ENCODE measurements at regions of chr13 and their contacts with region 1.

Region 1: GRCh38 chr13:29850224-29850898 is at the start of gene UBL3:
- DNase-seq: peak; percentile 89 to 97 (median 96)
- H3K4me3 ChIP-seq: peak within 1 kb of the TSS; percentile 74 to 91 (median 88)
- H3K4me3 Mint-ChIP-seq: peak within 1 kb of the TSS; percentile 97 to 99
- H3K27ac ChIP-seq: peak within 1 kb of the TSS; percentile 86 to 92
- H3K27ac Mint-ChIP-seq: peak within 1 kb of the TSS; percentile 97 to 100 (median 99)
- H3K4me1 ChIP-seq: peaks cover 19 to 28% of the 10 kb centered on the region in 2 donors
- H3K4me1 Mint-ChIP-seq: peaks cover 33% of the 10 kb centered on the region
- H3K27me3 ChIP-seq: no peaks in the 10 kb centered on the region
- H3K27me3 Mint-ChIP-seq: no peaks in the 10 kb centered on the region
- CTCF ChIP-seq: no peak
- polyA plus RNA-seq, gene UBL3: 13.0 to 32.3 (median 28.2) TPM

Region 2: GRCh38 chr13:29595380-29596063 is 254.8 kb before region 1 on chr13 and contains the start of gene SLC7A1:
- intact Hi-C with region 1: loop called in 1 of 2 experiments (anchors 10 kb)
- DNase-seq: peak; percentile 80 to 86 (median 82)
- H3K4me3 ChIP-seq: peak within 1 kb of the TSS; percentile 47 to 79 (median 77)
- H3K4me3 Mint-ChIP-seq: peak within 1 kb of the TSS; percentile 87 to 89
- H3K27ac ChIP-seq: peak within 1 kb of the TSS; percentile 38 to 95
- H3K27ac Mint-ChIP-seq: peak within 1 kb of the TSS; percentile 81 to 89 (median 87)
- H3K4me1 ChIP-seq: peaks cover 12 to 21% of the 10 kb centered on the region in 2 donors
- H3K4me1 Mint-ChIP-seq: peaks cover 25% of the 10 kb centered on the region
- H3K27me3 ChIP-seq: peaks cover 2 to 12% of the 10 kb centered on the region in 2 donors
- H3K27me3 Mint-ChIP-seq: peaks cover 10 to 17% (median 15%) of the 10 kb centered on the region in 3 donors
- CTCF ChIP-seq: no peak
- polyA plus RNA-seq, gene SLC7A1: 0.89 to 2.2 (median 0.92) TPM

Region 3: DNA sequence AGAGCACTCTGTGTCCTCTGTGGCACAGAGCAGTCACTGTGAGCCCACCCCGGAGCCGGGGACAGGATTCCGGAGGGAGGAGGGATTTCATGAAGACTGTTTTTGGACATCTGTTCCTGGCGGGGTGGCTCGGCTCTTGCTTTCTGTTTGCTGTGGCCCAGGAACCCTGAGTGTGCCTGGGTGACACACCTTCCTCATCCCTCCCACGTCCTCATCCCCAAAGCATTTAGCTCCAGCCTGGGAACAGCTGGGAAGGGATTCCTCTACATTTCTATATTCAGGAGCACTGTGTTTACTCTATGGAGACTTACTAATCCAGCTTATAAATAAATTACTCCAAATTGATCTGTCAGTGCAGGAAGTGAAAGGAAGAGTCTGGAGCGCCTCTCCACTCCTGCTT is 97.9 kb after region 1 on chr13:
- intact Hi-C with region 1: no loop called
- DNase-seq: no peak
- H3K4me3 ChIP-seq: no peak overlapping the region
- H3K4me3 Mint-ChIP-seq: no peak overlapping the region
- H3K27ac ChIP-seq: no peak overlapping the region
- H3K27ac Mint-ChIP-seq: no peak overlapping the region
- H3K4me1 ChIP-seq: peaks cover 0 to 6% of the 10 kb centered on the region in 2 donors
- H3K4me1 Mint-ChIP-seq: peaks cover 7% of the 10 kb centered on the region
- H3K27me3 ChIP-seq: no peaks in the 10 kb centered on the region
- H3K27me3 Mint-ChIP-seq: peaks cover 0 to 2% (median 1%) of the 10 kb centered on the region in 3 donors
- CTCF ChIP-seq: no peak

Region 4: DNA sequence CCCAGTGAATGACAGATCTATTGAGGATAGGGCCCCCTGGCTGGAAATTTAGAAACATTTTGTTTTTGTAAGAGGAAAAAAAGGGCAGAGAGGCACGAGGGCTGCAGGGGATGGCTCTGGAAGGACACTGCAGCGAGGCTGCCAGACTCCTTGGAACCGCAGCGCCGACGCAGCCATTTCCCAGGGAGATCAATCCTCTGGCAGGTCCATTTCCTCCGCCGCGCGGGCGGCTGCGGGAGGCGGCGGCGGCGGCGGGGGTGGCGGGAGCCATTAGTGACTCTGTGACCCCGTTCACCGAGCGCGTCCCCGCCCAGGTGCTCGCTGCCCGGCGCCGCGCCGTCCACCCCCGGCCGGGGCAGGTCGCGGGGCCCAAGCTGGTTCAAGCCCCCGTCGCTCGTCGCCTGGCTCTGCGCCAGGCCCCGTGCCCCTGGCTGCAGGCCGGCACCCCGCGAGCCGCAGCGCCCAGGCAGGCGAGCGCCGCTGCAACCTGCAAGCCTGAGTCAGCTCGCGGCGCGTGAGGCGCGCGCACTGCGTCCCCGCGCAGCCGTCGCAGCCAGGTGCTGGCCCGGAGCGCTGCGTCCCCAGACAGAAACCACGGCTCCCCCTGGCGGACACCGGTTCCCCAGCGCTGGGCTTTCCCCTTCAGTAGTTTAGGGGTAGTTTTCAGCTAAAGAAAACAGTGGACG is 264.4 kb after region 1 on chr13:
- intact Hi-C with region 1: loop called in 1 of 2 experiments (anchors 10 kb)
- DNase-seq: peak; percentile 75 to 86 (median 75)
- H3K4me3 ChIP-seq: peak overlapping the region in 2 of 3 experiments; percentile 14 to 74
- H3K4me3 Mint-ChIP-seq: peak overlapping the region; percentile 76 to 88
- H3K27ac ChIP-seq: no peak overlapping the region
- H3K27ac Mint-ChIP-seq: no peak overlapping the region
- H3K4me1 ChIP-seq: peaks cover 13 to 14% of the 10 kb centered on the region in 2 donors
- H3K4me1 Mint-ChIP-seq: peaks cover 27% of the 10 kb centered on the region
- H3K27me3 ChIP-seq: peaks cover 2 to 18% of the 10 kb centered on the region in 2 donors
- H3K27me3 Mint-ChIP-seq: peaks cover 13 to 22% (median 21%) of the 10 kb centered on the region in 3 donors
- CTCF ChIP-seq: peak; percentile 91

Region 5: GRCh38 chr13:30332456-30333143 is 482.2 kb after region 1 on chr13:
- intact Hi-C with region 1: no loop called
- DNase-seq: no peak
- H3K4me3 ChIP-seq: no peak overlapping the region
- H3K4me3 Mint-ChIP-seq: no peak overlapping the region
- H3K27ac ChIP-seq: no peak overlapping the region
- H3K27ac Mint-ChIP-seq: no peak overlapping the region
- H3K4me1 ChIP-seq: no peaks in the 10 kb centered on the region
- H3K4me1 Mint-ChIP-seq: peaks cover 3% of the 10 kb centered on the region
- H3K27me3 ChIP-seq: no peaks in the 10 kb centered on the region
- H3K27me3 Mint-ChIP-seq: peaks cover 0 to 2% (median 1%) of the 10 kb centered on the region in 3 donors
- CTCF ChIP-seq: no peak

Region 6: GRCh38 chr13:30617315-30618185 is 767.2 kb after region 1 on chr13 and contains the start of gene USPL1:
- intact Hi-C with region 1: loop called in 1 of 2 experiments (anchors 10 kb)
- DNase-seq: peak; percentile 97 to 99 (median 99)
- H3K4me3 ChIP-seq: peak within 1 kb of the TSS; percentile 95 to 100 (median 98)
- H3K4me3 Mint-ChIP-seq: no peak within 1 kb of the TSS
- H3K27ac ChIP-seq: peak within 1 kb of the TSS; percentile 100
- H3K27ac Mint-ChIP-seq: no peak within 1 kb of the TSS
- H3K4me1 ChIP-seq: peaks cover 28 to 34% of the 10 kb centered on the region in 2 donors
- H3K4me1 Mint-ChIP-seq: peaks cover 5% of the 10 kb centered on the region
- H3K27me3 ChIP-seq: no peaks in the 10 kb centered on the region
- H3K27me3 Mint-ChIP-seq: no peaks in the 10 kb centered on the region
- CTCF ChIP-seq: peak; percentile 19
- polyA plus RNA-seq, gene USPL1: 3.9 to 20.5 (median 5.5) TPM

Measured in CD14-positive monocyte (primary cell).